ENCODE measurements at regions of chr2 and their contacts with region 1.

Region 1: GRCh38 chr2:105337124-105338019 is at the start of gene C2orf49:
- DNase-seq: peak; percentile 85
- H3K4me3 Mint-ChIP-seq: peak within 1 kb of the TSS; percentile 100
- H3K27ac Mint-ChIP-seq: peak within 1 kb of the TSS; percentile 100
- H3K4me1 Mint-ChIP-seq: peaks cover 50% of the 10 kb centered on the region
- H3K27me3 Mint-ChIP-seq: no peaks in the 10 kb centered on the region
- total RNA-seq, gene C2orf49: 18.5 and 23.4 TPM in 2 replicates

Region 2: DNA sequence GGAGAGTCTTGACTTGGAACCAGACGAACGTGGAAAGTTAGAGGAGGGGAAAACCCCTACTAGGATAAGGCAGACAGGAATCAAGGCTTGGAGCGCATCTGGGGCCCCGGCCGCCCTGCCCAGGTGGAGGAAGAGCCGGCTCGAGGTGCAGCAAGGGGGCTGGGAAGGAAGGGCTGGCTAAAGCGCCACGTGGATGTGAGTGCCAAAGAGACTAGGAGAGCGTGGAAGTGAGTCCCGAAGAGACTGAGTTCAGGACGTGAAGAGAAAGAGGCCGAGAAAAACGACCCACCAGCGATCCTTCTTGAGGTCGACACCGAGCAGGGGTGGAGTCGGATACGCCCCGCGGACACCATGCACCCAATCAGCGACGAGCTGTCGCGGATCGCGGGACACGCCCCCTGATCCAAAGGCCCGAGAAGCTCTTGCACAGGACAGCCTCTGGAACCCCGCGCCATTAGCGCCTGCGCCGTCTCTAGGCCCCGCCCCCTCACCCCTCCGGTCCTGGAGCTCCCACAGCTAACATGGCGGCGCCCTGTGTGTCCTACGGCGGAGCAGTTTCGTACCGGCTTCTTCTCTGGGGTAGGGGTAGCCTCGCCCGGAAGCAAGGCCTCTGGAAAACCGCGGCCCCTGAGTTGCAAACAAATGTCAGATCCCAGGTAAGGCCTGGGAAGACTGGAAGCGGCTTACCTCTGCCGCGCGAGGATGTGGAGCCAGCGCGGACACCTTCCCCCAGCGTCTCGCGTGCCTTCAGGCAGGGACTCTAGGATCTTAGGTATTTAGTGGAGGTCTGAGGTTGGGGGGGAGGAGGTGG is 299.6 kb before region 1 on chr2 and contains the start of gene MRPS9:
- intact Hi-C with region 1: loop called (anchors 2 kb)
- DNase-seq: peak; percentile 96
- H3K4me3 Mint-ChIP-seq: peak within 1 kb of the TSS; percentile 95
- H3K27ac Mint-ChIP-seq: peak within 1 kb of the TSS; percentile 84
- H3K4me1 Mint-ChIP-seq: peaks cover 39% of the 10 kb centered on the region
- H3K27me3 Mint-ChIP-seq: no peaks in the 10 kb centered on the region
- total RNA-seq, gene MRPS9: 32.5 and 33.0 TPM in 2 replicates

Region 3: GRCh38 chr2:105287692-105288091 is 49.7 kb before region 1 on chr2:
- intact Hi-C with region 1: loop called (anchors 2 kb)
- DNase-seq: no peak
- H3K4me3 Mint-ChIP-seq: no peak overlapping the region
- H3K27ac Mint-ChIP-seq: no peak overlapping the region
- H3K4me1 Mint-ChIP-seq: peaks cover 5% of the 10 kb centered on the region
- H3K27me3 Mint-ChIP-seq: no peaks in the 10 kb centered on the region

Region 4: DNA sequence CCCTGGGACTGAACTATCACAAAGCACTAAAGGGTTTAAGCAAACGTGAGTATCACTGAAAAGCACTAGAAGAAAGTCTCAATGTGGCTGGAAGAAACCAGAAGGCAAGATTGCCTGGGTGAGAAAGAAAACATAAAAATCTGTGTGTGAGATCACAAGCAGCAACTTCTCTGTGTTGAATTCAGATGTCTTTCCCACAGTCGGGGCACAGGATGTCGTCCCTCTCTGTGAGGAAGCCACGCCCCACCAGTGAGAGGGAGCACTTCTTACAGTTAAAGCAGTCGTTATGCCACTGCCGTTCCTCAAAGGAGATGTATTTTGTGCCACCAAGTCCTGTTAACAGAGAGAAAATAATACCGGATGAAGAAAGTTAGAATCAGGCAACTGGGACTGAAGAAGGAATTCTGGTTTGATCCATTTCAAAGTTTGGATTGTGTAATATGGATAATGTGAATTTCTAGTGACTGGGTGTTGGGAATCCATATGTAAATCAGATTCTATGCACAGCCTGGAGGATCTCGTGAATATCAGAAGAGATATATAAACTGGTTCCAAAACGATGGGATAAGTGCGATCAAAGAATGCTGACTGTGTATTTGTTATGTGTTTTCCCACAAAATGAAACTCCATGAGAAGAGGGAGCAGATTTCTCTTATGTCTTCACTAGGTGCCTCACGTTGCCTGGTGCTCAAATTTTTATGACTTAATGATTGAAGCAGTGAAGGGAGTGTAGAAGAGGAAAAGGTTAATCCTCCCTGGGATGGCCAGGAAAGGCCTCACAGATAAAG is 23.9 kb after region 1 on chr2:
- intact Hi-C with region 1: no loop called
- DNase-seq: no peak
- H3K4me3 Mint-ChIP-seq: no peak overlapping the region
- H3K27ac Mint-ChIP-seq: no peak overlapping the region
- H3K4me1 Mint-ChIP-seq: peaks cover 27% of the 10 kb centered on the region
- H3K27me3 Mint-ChIP-seq: peaks cover 2% of the 10 kb centered on the region

Region 5: DNA sequence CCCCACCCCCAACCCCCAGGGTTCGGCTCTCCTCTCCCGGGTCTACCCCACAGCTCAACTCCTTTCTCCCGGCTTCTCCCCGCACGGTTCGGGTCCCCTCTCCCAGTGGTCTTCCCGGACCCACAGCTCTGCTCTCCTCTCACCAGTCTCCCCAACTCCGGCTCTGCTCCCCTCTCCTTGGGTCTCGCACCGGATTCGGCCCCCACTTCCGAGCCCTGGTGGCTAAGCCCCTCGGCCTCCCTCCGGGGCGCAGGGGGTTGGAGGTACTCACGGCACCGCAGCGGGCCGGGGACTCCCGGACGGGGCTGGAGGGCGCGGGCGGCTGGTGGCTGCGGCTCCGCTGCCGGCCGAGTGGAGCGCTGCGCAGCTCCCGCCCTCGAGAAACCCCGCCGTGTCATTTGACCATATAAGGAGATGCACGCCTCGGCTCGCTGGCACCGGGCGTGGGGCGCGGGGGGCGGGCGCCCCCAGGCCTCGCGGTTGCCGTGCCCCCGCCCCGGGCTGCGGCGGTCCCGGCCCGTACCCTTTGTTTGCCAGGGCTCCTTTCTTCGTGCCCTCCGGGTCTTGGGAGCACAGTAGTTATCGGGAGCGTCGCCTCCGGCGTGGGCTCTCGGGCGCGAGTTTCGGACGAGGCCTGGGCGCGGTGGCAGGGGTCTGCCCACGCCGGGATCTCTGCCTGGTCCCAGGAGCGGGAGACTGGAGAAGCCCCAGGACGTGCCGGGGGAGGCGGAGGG is 61.5 kb after region 1 on chr2 and contains the start of gene FHL2:
- intact Hi-C with region 1: loop called (anchors 1 kb)
- DNase-seq: peak; percentile 65
- H3K4me3 Mint-ChIP-seq: peak within 1 kb of the TSS; percentile 82
- H3K27ac Mint-ChIP-seq: peak within 1 kb of the TSS; percentile 54
- H3K4me1 Mint-ChIP-seq: peaks cover 4% of the 10 kb centered on the region
- H3K27me3 Mint-ChIP-seq: peaks cover 39% of the 10 kb centered on the region
- total RNA-seq, gene FHL2: 2.3 and 2.6 TPM in 2 replicates

Region 6: GRCh38 chr2:105487142-105488069 is 150.0 kb after region 1 on chr2:
- intact Hi-C with region 1: no loop called
- DNase-seq: no peak
- H3K4me3 Mint-ChIP-seq: no peak overlapping the region
- H3K27ac Mint-ChIP-seq: no peak overlapping the region
- H3K4me1 Mint-ChIP-seq: no peaks in the 10 kb centered on the region
- H3K27me3 Mint-ChIP-seq: peaks cover 11% of the 10 kb centered on the region

Region 7: DNA sequence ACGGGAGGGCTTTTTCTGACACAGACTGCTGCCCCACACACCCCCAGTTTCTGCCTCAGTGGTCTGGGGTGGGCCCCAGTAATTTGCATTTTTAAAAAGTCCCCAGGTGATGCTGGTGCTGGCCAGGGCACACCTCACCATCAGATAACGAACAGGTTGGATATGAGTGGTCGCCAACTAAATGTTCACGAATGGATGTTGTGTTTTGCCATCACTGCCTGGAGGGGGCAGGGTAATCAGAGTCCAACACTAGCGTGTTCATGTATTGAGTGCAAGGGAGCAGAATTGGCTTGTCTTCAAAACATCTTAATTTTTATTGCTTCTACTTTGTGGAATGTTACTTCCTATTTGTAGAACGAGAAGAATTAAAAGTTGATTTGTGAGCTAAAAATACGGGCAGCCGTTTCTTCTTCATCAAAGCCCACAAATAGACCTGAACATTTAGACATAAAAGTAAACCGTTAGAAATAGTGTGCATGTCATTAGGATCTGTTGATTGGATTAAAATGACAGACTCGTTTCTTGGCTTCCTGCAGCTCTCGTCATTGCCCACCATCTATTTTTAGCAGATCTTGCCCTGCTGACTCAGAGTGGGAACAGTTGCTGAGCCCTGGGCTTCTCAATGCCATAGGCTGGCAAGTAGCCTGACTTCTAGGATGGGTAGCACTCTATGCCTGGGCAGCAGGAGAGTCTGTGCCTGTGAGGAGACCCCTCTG is 452.5 kb after region 1 on chr2:
- intact Hi-C with region 1: loop called (anchors 10 kb)
- DNase-seq: peak; percentile 66
- H3K4me3 Mint-ChIP-seq: peak overlapping the region; percentile 66
- H3K27ac Mint-ChIP-seq: peak overlapping the region; percentile 92
- H3K4me1 Mint-ChIP-seq: peaks cover 85% of the 10 kb centered on the region
- H3K27me3 Mint-ChIP-seq: no peaks in the 10 kb centered on the region

Region 8: GRCh38 chr2:106098081-106098480 is 760.7 kb after region 1 on chr2:
- intact Hi-C with region 1: loop called (anchors 10 kb)
- DNase-seq: no peak
- H3K4me3 Mint-ChIP-seq: no peak overlapping the region
- H3K27ac Mint-ChIP-seq: no peak overlapping the region
- H3K4me1 Mint-ChIP-seq: peaks cover 31% of the 10 kb centered on the region
- H3K27me3 Mint-ChIP-seq: no peaks in the 10 kb centered on the region

Measured in activated T-helper 1 cell treated with anti-CD3 and anti-CD28 coated beads, Interleukin-12 subunit alpha, Interleukin-12 subunit beta, Interleukin-2, Interleukin-4 antibody, amounts not matched to agents 30 ng/mL and 10 ng/mL and 1 ng/mL, durations not matched to agents 14 hours and 24 hours and 36 hours (primary cell).